ENCODE measurements at regions of chr3 and their contacts with region 1.

Region 1: GRCh38 chr3:127690823-127691452 is 18.2 kb downstream of the ABTB1 start:
- DNase-seq: no peak
- H3K4me3 ChIP-seq: no peak overlapping the region
- CTCF ChIP-seq: peak; percentile 91

Region 2: GRCh38 chr3:127535901-127536829 is 154.8 kb before region 1 on chr3:
- CTCF ChIA-PET with region 1: no interaction called
- POLR2A ChIA-PET with region 1: no interaction called
- DNase-seq: no peak
- H3K4me3 ChIP-seq: no peak overlapping the region
- CTCF ChIP-seq: no peak

Region 3: DNA sequence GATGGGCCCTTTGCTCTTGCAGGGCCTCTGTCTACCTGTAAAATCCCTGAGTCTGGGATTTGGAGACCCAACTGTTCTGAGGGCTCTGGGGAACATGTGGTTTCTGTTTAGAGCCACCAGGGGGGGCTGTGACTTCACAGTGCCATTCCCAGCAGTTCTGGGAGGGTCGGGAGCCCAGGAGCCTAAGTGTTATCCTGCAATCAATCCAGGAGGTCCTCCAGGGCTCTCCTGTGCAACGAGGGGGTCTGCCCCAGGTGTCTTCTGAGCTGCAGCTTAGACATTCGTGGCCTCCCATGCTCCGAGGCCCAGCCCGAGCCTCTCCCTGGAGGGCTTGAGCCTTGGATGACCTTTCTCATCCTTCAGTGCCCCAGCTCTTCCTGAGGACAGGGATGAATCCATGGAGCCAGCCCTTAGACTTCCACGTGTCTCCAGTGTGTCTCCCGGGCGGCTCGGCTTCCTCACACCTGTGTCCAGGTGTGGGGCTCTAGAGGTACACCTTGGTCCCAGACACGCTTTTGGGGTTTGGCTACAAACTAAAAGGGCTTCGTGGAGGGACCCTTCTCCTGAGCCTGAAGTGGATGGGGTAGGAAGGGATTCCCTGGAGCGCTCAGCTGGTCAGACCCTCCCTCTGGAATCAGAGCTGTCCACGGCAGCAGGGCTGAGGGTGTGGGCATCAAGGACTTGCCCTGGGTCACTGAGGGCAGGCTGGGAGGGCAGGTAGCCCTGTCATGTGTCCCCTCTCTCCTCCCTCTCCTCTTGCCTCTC is 38.5 kb before region 1 on chr3:
- CTCF ChIA-PET with region 1: interaction called, 21 read pairs
- POLR2A ChIA-PET with region 1: no interaction called
- DNase-seq: no peak
- H3K4me3 ChIP-seq: no peak overlapping the region
- CTCF ChIP-seq: peak; percentile 81

Region 4: GRCh38 chr3:127822698-127823425 is 131.9 kb after region 1 on chr3:
- CTCF ChIA-PET with region 1: interaction called, 31 read pairs
- POLR2A ChIA-PET with region 1: interaction called, 7 read pairs
- DNase-seq: no peak
- H3K4me3 ChIP-seq: peak overlapping the region; percentile 77
- CTCF ChIP-seq: peak; percentile 33

Region 5: DNA sequence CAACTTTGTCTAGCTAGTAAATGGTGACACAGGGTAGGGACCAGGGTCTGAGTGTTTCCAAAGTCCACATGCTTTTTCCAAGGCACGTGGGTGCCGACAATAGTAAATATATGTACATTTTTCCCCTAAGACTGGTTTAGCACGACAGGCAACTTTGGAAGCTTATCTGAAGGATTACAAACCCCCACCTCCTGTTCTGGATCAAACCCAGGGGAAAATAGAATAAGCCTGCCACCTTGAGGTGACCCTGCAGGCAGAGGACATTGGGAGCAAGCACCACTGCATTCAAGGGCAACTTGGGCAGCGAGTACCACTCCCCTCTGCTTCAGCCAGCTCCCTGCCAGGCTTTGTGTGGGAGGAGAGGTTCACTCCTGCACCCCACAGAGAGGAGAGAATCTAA is 268.9 kb after region 1 on chr3:
- CTCF ChIA-PET with region 1: interaction called, 15 read pairs
- POLR2A ChIA-PET with region 1: no interaction called
- DNase-seq: no peak
- H3K4me3 ChIP-seq: no peak overlapping the region
- CTCF ChIP-seq: no peak

Measured in AG04449 (cell line).